Breast epithelium (tissue), 4 donors: ENCODE measurements at regions of chr5 and their contacts with region 1.

Region 1: GRCh38 chr5:143509758-143510221 is 106.3 kb upstream of the NR3C1 start:
- DNase-seq: no peak
- H3K4me3 ChIP-seq: no peak overlapping the region
- H3K27ac ChIP-seq: no peak overlapping the region
- H3K4me1 ChIP-seq: peaks cover 0 to 6% of the 10 kb centered on the region in 2 donors
- H3K27me3 ChIP-seq: no peaks in the 10 kb centered on the region
- CTCF ChIP-seq: no peak
- POLR2A ChIP-seq: no peak

Region 2: DNA sequence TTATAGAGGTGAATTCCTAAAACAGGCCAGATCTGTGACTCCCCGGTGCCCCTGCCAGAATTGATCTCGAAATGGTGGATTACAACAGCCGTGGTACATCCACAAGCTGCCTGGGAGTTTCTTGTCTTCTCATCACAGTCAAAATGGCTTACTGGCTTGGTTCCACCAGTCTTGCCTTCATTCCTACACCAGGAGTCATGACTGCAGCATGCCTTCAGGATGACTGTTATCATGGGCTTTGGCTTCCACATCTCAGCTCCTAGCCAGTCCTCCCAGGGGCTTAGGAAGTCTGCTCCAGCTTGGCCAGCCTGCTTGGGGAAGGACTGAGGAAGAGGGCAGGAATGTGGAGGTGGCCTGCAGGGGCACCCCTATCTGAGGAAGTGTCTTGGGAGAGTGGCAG is 26.6 kb after region 1 on chr5:
- intact Hi-C with region 1: loop called (anchors 1 kb)
- DNase-seq: no peak
- H3K4me3 ChIP-seq: no peak overlapping the region
- H3K27ac ChIP-seq: no peak overlapping the region
- H3K4me1 ChIP-seq: no peaks in the 10 kb centered on the region
- H3K27me3 ChIP-seq: no peaks in the 10 kb centered on the region
- CTCF ChIP-seq: no peak
- POLR2A ChIP-seq: no peak